Activated T-helper 2 cell treated with anti-CD3 and anti-CD28 coated beads, Interferon-gamma antibody, Interleukin-2, Interleukin-4, amounts not matched to agents 10 μg/mL and 5 μg/mL and 100 μg/mL, durations not matched to agents 14 hours and 24 hours and 36 hours (primary cell): ENCODE measurements at regions of chr2 and their contacts with region 1.

Region 1: GRCh38 chr2:134118279-134119116 is 135.4 kb upstream of the MGAT5 start:
- DNase-seq: peak; percentile 62
- H3K4me3 Mint-ChIP-seq: peak overlapping the region; percentile 47
- H3K27ac Mint-ChIP-seq: no peak overlapping the region
- H3K4me1 Mint-ChIP-seq: peaks cover 19% of the 10 kb centered on the region
- H3K27me3 Mint-ChIP-seq: peaks cover 42% of the 10 kb centered on the region

Region 2: GRCh38 chr2:134232868-134233727 is 114.6 kb after region 1 on chr2:
- intact Hi-C with region 1: loop called (anchors 1 kb)
- DNase-seq: no peak
- H3K4me3 Mint-ChIP-seq: no peak overlapping the region
- H3K27ac Mint-ChIP-seq: peak overlapping the region; percentile 10
- H3K4me1 Mint-ChIP-seq: peaks cover 42% of the 10 kb centered on the region
- H3K27me3 Mint-ChIP-seq: peaks cover 17% of the 10 kb centered on the region

Region 3: DNA sequence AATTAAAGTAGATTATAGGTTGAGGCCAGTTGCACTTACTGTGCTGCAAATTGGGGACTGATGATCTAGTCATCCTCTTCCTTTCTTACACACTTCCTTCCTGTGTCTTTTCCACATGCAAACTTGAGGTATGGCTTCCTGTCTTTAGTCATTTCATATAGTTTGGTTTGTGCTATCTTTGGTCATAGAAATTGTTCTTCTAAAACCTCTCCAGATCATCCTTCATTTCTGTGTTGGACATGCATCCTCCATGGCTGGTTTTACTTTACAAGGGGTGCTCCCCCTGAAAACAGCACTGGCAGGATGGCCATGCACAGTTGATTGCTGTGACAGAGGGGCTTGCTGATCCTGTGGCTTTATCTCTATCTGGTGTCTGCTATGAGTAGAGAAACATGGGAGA is 171.9 kb after region 1 on chr2:
- intact Hi-C with region 1: loop called (anchors 1 kb)
- DNase-seq: no peak
- H3K4me3 Mint-ChIP-seq: no peak overlapping the region
- H3K27ac Mint-ChIP-seq: no peak overlapping the region
- H3K4me1 Mint-ChIP-seq: peaks cover 9% of the 10 kb centered on the region
- H3K27me3 Mint-ChIP-seq: peaks cover 24% of the 10 kb centered on the region

Region 4: GRCh38 chr2:134668821-134669220 is 550.3 kb after region 1 on chr2:
- intact Hi-C with region 1: loop called (anchors 1 kb)
- DNase-seq: peak; percentile 76
- H3K4me3 Mint-ChIP-seq: no peak overlapping the region
- H3K27ac Mint-ChIP-seq: peak overlapping the region; percentile 28
- H3K4me1 Mint-ChIP-seq: peaks cover 67% of the 10 kb centered on the region
- H3K27me3 Mint-ChIP-seq: peaks cover 33% of the 10 kb centered on the region

Region 5: DNA sequence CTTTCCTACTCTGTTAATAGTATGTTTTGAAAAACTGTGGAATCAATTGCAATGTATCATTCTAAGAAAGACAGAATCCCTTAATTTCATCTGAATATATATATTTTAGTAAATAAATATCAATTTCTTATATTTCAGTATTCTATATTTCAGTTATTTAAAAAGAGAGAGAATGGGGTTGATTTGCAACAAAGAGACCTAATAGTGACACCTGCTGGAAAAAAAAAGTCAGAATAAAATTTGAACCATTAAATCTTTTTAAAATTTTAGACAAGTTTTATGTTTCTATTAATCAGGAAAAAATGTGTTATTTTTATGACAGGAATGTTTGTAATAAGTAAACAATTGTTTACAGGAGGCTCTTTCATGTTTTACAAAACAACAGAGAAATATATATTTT is 779.4 kb after region 1 on chr2:
- intact Hi-C with region 1: loop called (anchors 5 kb)
- DNase-seq: no peak
- H3K4me3 Mint-ChIP-seq: no peak overlapping the region
- H3K27ac Mint-ChIP-seq: no peak overlapping the region
- H3K4me1 Mint-ChIP-seq: no peaks in the 10 kb centered on the region
- H3K27me3 Mint-ChIP-seq: peaks cover 27% of the 10 kb centered on the region

Region 6: DNA sequence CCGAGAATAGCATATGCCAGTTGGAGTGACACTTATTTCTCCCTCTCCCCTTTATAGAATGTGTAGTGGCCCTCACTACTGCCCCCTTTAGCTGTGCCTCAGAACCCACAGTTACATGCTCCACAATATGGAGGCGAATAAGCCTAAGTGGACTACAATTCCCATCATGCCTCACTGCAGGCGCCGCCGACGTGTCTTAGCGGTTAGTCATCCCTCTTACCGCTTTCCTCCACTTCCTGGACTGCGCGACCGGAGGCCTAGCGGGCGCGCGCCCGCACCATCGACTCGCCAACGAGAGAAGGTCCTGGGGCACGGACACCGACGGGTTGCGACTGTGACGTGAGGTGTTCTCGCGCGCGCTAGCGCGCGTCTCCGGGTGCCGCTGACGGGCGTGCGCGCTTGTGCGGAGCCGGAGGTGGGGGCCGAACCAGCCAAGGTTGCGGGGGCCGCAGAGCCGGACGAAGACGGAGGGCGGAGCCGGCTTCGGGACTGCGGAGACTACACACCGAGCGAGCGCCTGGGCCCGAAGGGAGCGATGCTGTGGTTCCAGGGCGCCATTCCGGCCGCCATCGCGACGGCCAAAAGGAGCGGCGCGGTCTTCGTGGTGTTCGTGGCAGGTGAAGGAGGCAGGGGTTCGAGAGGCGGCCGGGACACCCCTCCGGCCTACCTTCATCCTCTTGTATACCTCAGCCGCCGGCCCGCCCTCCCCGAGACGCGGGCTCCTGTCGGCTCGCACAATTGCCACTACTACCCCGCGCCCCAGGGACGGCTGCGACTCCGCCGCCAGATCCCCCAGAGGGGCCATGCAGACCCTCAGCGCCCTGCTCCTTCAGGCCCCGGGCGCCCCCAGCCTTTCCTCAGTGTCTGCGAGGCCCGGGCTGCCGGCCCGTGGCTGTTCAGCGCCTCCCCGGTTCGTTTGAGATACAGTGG is 1623.2 kb after region 1 on chr2 and contains the start of gene UBXN4:
- intact Hi-C with region 1: loop called (anchors 5 kb)
- DNase-seq: peak; percentile 90
- H3K4me3 Mint-ChIP-seq: peak within 1 kb of the TSS; percentile 98
- H3K27ac Mint-ChIP-seq: peak within 1 kb of the TSS; percentile 100
- H3K4me1 Mint-ChIP-seq: peaks cover 34% of the 10 kb centered on the region
- H3K27me3 Mint-ChIP-seq: no peaks in the 10 kb centered on the region
- total RNA-seq, gene UBXN4: 118 and 138 TPM in 2 replicates